CD14-positive monocyte (primary cell): ENCODE measurements at regions of chr19 and their contacts with region 1.

Region 1: DNA sequence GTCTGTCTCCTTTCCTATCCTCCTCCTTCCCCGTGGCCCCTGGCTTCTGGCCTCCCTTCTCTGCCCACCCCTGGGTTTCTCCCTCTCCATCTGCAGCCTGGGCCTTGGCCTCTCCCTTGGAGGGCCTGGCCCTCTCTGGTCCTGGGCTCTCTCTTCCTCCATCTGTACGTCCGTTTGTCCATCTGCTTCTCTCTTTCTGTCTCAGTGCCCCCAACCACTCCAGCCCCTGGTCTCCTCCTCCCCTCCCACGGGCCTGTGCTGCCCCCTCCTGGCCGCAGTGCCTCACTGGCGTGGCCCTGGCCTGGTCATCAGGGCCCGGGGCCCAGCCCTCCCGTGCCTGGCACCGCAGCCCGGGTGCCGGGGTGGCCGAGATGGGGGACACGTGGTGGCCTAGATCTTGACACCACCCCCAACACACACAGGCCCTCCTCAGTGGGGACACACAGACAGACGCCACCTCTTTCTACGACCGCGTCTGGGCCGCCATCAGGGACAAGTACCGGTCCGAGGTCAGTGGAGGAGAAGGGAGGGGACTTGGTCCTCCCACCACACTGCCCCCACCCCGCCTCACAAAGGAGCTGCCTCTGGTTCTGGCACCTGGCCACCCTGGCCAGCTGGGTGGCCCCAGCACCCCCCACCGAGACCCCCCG is 11.3 kb downstream of the PRKCSH start:
- DNase-seq: peak; percentile 22 to 54 (median 41)
- H3K4me3 ChIP-seq: no peak overlapping the region
- H3K4me3 Mint-ChIP-seq: no peak overlapping the region
- H3K27ac ChIP-seq: no peak overlapping the region
- H3K27ac Mint-ChIP-seq: peak overlapping the region in 3 of 7 donors; percentile 35 to 85 (median 70)
- H3K4me1 ChIP-seq: no peaks in the 10 kb centered on the region
- H3K4me1 Mint-ChIP-seq: peaks cover 2% of the 10 kb centered on the region
- H3K27me3 ChIP-seq: no peaks in the 10 kb centered on the region
- H3K27me3 Mint-ChIP-seq: peaks cover 0 to 2% (median 2%) of the 10 kb centered on the region in 3 donors
- CTCF ChIP-seq: peak; percentile 80

Region 2: DNA sequence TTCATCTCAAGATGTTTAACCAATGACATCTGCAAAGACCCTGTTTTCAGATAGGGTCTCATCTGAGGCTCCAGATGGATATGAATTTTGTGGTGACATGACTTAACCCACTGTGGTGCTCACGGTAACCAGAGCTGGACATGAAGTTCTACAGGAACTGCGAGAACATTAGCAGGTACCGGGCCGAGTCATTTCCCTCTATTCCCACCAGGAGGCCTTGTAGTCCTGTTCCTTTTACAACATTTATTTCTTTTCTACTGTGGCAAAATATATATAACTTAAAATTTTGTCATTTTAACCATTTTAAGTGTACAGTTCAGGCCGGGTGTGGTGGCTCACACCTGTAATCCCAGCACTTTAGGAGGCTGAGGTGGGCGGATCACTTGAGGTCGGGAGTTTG is 158.4 kb before region 1 on chr19:
- intact Hi-C with region 1: loop called (anchors 1 to 5 kb)
- DNase-seq: peak; percentile 35 to 55 (median 44)
- H3K4me3 ChIP-seq: no peak overlapping the region
- H3K4me3 Mint-ChIP-seq: peak overlapping the region in 1 of 2 donors; percentile 42
- H3K27ac ChIP-seq: no peak overlapping the region
- H3K27ac Mint-ChIP-seq: no peak overlapping the region
- H3K4me1 ChIP-seq: peaks cover 29 to 34% of the 10 kb centered on the region in 2 donors
- H3K4me1 Mint-ChIP-seq: peaks cover 32% of the 10 kb centered on the region
- H3K27me3 ChIP-seq: peaks cover 6 to 29% of the 10 kb centered on the region in 2 donors
- H3K27me3 Mint-ChIP-seq: peaks cover 32 to 46% (median 44%) of the 10 kb centered on the region in 3 donors
- CTCF ChIP-seq: peak; percentile 75

Region 3: GRCh38 chr19:11299946-11300810 is 146.6 kb before region 1 on chr19:
- intact Hi-C with region 1: no loop called
- DNase-seq: no peak
- H3K4me3 ChIP-seq: no peak overlapping the region
- H3K4me3 Mint-ChIP-seq: no peak overlapping the region
- H3K27ac ChIP-seq: no peak overlapping the region
- H3K27ac Mint-ChIP-seq: peak overlapping the region in 2 of 7 donors; percentile 72 to 75
- H3K4me1 ChIP-seq: peaks cover 29 to 36% of the 10 kb centered on the region in 2 donors
- H3K4me1 Mint-ChIP-seq: peaks cover 49% of the 10 kb centered on the region
- H3K27me3 ChIP-seq: no peaks in the 10 kb centered on the region
- H3K27me3 Mint-ChIP-seq: peaks cover 0 to 2% (median 0%) of the 10 kb centered on the region in 3 donors
- CTCF ChIP-seq: no peak